AG04449 (cell line): ENCODE measurements at regions of chr19 and their contacts with region 1.

Region 1: DNA sequence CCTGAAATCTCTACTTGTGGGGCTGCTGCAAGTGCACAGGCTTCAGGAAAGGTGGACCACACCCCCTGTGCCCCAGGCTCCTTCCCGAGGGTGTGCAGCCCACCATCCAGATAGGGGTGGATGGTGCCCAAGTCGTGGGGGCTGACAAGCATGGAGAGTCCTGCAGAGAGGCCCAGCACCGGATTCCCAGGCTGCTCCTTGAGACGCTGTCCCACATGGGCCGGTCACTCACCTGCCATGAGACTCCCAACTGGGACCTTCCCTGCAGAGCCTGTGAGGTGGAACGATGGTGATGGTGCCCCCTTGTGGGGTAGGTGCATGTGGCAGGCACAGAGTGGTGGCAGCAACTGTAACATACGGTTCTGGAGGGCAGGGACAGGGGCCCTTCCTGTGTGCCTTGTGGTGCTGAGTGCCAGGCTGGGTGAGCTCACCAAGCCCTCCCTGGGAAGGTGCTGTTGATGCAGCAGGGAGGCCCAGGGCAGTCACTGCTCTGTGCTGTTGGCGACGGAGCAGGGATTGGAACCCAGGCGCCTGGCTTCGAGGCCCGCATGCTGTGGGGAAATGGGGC is 33.0 kb downstream of the PPP1R37 start:
- DNase-seq: no peak
- H3K4me3 ChIP-seq: no peak overlapping the region
- CTCF ChIP-seq: peak; percentile 91

Region 2: GRCh38 chr19:44954824-44955586 is 171.0 kb before region 1 on chr19 and contains the start of gene CLPTM1:
- CTCF ChIA-PET with region 1: no interaction called
- POLR2A ChIA-PET with region 1: no interaction called
- DNase-seq: peak; percentile 70
- H3K4me3 ChIP-seq: peak within 1 kb of the TSS; percentile 98
- CTCF ChIP-seq: no peak

Region 3: DNA sequence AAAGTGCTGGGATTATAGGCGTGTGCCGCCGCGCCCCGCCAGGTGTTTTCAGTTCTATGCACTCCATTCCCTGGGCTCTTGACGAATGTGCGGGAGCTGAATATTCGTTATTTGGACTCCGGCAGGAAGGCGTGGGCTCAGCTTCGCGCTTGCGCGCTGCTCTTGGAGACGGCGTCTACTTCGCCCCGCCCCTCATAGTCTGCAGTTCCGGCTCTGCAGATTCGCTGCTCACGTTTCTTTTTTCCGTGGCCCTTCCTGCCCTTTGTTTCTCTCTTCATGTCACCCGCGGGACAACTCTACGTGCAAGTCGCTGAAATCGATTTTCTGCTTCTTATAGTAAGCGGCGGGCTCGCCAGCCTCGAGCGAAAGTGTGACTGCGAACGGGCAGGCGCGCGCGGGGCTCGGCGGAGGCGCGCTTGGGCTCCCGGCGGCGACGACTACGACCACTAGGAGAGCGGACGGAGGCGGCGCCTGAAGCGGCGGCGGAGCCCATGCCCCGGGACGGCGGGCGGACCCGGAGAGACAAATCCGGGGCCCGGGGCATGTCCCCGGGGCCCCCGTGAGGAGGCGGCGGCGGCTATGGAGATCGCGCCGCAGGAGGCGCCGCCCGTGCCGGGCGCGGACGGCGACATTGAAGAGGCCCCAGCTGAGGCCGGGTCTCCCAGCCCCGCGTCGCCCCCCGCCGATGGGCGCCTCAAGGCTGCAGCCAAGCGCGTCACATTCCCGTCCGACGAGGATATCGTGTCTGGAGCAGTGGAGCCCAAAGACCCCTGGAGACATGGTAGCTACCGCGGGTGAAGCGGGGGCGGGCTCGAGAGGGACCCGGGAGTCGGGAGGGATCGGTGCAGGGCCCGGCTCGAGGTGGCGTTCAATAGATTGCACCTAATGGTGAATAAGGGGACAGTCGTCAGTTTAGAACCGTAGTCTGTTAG is 33.0 kb before region 1 on chr19 and contains the start of gene PPP1R37:
- CTCF ChIA-PET with region 1: interaction called, 37 read pairs
- POLR2A ChIA-PET with region 1: no interaction called
- DNase-seq: peak; percentile 69
- H3K4me3 ChIP-seq: peak within 1 kb of the TSS; percentile 92
- CTCF ChIP-seq: peak; percentile 53

Region 4: DNA sequence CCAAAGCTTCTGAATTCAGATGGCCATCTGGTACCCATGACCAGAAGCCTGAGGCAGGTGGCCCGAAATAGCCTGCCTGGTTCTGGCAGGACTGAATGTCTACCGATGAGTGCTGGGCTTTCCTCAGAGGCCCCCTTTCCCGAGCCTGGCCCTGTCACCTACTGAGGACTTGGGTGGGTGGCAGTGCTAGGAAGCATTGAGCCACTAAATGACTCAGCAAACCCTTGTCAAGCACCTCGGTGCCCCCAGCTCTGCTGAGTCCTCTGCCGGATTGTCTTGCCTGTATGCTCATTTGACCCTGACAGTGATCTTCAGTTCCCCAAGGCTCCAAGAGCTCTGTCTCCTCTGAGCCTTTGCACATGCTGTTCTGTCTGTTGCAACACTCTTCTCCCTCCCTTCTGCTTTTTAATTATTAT is 15.2 kb before region 1 on chr19:
- CTCF ChIA-PET with region 1: interaction called, 29 read pairs
- POLR2A ChIA-PET with region 1: no interaction called
- DNase-seq: no peak
- H3K4me3 ChIP-seq: no peak overlapping the region
- CTCF ChIP-seq: no peak

Region 5: DNA sequence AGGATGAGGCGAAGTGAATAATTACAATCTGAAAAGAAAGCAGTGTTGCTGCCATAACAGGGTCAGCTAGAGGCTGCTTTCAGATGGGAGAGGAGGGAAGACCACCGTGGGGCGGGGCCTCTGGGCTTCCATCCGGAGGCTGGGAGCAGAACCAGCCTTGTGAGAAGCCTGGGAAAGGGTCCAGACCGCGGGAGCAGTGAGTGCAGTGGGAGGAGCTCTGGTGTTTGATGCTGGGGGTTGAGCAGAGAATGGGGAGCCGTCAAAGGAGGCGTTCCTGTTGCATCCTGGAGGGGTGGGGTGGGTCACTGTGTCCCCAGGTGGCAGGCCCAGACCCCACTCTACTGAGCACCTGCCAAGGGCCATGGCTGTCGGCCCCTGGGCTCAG is 16.7 kb after region 1 on chr19:
- CTCF ChIA-PET with region 1: interaction called, 50 read pairs
- POLR2A ChIA-PET with region 1: no interaction called
- DNase-seq: no peak
- H3K4me3 ChIP-seq: no peak overlapping the region
- CTCF ChIP-seq: no peak

Region 6: GRCh38 chr19:45234089-45234869 is 108.3 kb after region 1 on chr19:
- CTCF ChIA-PET with region 1: no interaction called
- POLR2A ChIA-PET with region 1: no interaction called
- DNase-seq: no peak
- H3K4me3 ChIP-seq: no peak overlapping the region
- CTCF ChIP-seq: no peak

Region 7: DNA sequence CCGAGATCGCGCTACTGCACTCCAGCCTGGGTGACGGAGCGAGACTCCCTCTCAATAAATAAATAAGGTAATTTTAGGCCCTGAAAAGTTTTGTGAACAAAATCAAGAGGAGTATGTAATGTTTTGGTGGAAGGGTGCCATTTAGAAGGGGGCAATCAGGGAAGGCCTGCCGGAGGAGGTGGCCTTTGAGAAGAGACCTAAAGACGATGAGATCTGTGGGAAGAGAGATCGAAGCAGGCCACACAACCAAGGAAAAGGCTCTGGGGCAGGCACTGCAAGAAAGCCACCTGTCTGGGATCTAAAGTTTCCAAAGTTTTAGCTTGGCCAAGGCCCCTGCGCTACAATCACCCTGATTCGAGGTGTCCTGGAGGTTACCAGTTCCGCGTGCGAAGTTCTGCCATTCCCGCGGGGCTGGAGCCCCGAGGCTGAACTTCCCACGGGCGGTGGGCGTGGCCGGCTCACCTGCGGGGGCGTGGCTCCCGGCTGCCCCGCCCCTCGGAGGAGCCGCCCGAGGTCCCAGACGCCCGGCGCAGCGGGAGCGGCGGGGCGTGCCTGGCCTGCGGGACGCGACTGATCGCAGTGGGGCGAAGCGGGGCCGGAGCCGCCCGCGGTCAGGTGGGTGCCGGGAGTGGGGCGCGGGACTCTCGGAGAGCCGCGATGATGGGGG is 214.4 kb after region 1 on chr19 and contains the start of gene KLC3:
- CTCF ChIA-PET with region 1: interaction called, 12 read pairs
- POLR2A ChIA-PET with region 1: no interaction called
- DNase-seq: no peak
- H3K4me3 ChIP-seq: no peak within 1 kb of the TSS
- CTCF ChIP-seq: no peak